Mammary epithelial cell (primary cell): ENCODE measurements at regions of chr10 and their contacts with region 1.

Region 1: GRCh38 chr10:101818119-101818871 is at the start of gene OGA:
- DNase-seq: peak; percentile 100
- H3K4me3 ChIP-seq: peak within 1 kb of the TSS; percentile 77 to 88 (median 77)
- H3K27ac ChIP-seq: peak within 1 kb of the TSS; percentile 78
- H3K4me1 ChIP-seq: peaks cover 18% of the 10 kb centered on the region
- H3K27me3 ChIP-seq: no peaks in the 10 kb centered on the region
- CTCF ChIP-seq: no peak
- total RNA-seq, gene OGA: 82.4 to 97.5 TPM

Region 2: GRCh38 chr10:101858723-101859500 is 40.6 kb after region 1 on chr10:
- CTCF ChIA-PET with region 1: no interaction called
- dilution Hi-C with region 1: no loop called
- in situ Hi-C with region 1: no loop called
- intact Hi-C with region 1: no loop called
- DNase-seq: no peak
- H3K4me3 ChIP-seq: no peak overlapping the region
- H3K27ac ChIP-seq: no peak overlapping the region
- H3K4me1 ChIP-seq: no peaks in the 10 kb centered on the region
- H3K27me3 ChIP-seq: no peaks in the 10 kb centered on the region
- CTCF ChIP-seq: no peak

Region 3: DNA sequence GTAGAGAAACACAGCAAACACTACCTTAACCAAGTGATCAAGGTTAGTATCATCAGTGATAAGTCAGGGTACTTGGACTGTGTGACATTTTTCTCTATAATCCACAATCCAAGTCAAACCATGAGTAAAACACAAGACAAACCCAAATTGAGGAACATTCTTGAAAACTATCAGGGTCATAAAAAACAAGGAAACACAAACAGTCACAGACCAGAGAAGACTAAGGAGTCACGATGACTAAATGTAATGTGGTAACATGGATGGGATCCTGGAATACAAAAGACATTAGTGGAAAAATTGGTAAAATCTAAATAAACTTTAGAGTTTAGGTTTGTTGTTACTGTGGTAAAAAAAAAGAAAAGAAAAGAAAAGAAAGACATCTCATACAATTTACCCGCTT is 133.9 kb after region 1 on chr10:
- CTCF ChIA-PET with region 1: no interaction called
- dilution Hi-C with region 1: no loop called
- in situ Hi-C with region 1: no loop called
- intact Hi-C with region 1: no loop called
- DNase-seq: no peak
- H3K4me3 ChIP-seq: no peak overlapping the region
- H3K27ac ChIP-seq: no peak overlapping the region
- H3K4me1 ChIP-seq: no peaks in the 10 kb centered on the region
- H3K27me3 ChIP-seq: no peaks in the 10 kb centered on the region
- CTCF ChIP-seq: no peak

Region 4: GRCh38 chr10:102055647-102056419 is 237.5 kb after region 1 on chr10 and contains the start of gene ARMH3:
- CTCF ChIA-PET with region 1: no interaction called
- dilution Hi-C with region 1: no loop called
- in situ Hi-C with region 1: no loop called
- intact Hi-C with region 1: loop called (anchors 1 kb)
- DNase-seq: peak; percentile 97
- H3K4me3 ChIP-seq: peak within 1 kb of the TSS; percentile 72 to 91 (median 85)
- H3K27ac ChIP-seq: peak within 1 kb of the TSS; percentile 62
- H3K4me1 ChIP-seq: no peaks in the 10 kb centered on the region
- H3K27me3 ChIP-seq: no peaks in the 10 kb centered on the region
- CTCF ChIP-seq: no peak
- total RNA-seq, gene ARMH3: 13.8 to 23.2 TPM

Region 5: DNA sequence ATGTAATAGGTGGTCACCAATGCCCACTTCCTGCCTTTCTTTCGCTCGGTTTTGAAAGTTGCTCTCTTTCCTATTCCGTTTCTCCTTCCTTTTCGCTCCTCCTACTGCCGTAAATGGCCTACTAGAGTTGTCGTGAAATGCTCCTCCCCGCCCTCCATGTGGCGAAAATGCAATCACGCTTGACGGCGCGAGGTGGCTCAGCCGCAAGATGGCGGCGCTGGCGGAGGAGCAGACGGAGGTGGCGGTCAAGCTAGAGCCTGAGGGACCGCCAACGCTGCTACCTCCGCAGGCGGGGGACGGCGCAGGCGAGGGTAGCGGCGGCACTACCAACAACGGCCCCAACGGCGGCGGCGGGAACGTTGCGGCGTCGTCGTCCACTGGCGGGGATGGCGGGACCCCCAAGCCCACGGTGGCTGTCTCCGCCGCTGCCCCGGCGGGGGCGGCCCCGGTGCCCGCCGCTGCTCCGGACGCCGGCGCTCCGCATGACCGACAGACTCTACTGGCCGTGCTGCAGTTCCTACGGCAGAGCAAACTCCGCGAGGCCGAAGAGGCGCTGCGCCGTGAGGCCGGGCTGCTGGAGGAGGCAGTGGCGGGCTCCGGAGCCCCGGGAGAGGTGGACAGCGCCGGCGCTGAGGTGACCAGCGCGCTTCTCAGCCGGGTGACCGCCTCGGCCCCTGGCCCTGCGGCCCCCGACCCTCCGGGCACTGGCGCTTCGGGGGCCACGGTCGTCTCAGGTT is 1549.7 kb after region 1 on chr10 and contains the start of gene TAF5:
- CTCF ChIA-PET with region 1: no interaction called
- dilution Hi-C with region 1: no loop called
- in situ Hi-C with region 1: no loop called
- intact Hi-C with region 1: loop called (anchors 10 kb)
- DNase-seq: peak; percentile 93
- H3K4me3 ChIP-seq: peak within 1 kb of the TSS; percentile 76 to 93 (median 88)
- H3K27ac ChIP-seq: peak within 1 kb of the TSS; percentile 23
- H3K4me1 ChIP-seq: peaks cover 8% of the 10 kb centered on the region
- H3K27me3 ChIP-seq: no peaks in the 10 kb centered on the region
- CTCF ChIP-seq: no peak
- total RNA-seq, gene TAF5: 2.8 to 4.3 TPM